Endothelial cell of umbilical vein (primary cell): ENCODE measurements at regions of chr3 and their contacts with region 1.

Region 1: DNA sequence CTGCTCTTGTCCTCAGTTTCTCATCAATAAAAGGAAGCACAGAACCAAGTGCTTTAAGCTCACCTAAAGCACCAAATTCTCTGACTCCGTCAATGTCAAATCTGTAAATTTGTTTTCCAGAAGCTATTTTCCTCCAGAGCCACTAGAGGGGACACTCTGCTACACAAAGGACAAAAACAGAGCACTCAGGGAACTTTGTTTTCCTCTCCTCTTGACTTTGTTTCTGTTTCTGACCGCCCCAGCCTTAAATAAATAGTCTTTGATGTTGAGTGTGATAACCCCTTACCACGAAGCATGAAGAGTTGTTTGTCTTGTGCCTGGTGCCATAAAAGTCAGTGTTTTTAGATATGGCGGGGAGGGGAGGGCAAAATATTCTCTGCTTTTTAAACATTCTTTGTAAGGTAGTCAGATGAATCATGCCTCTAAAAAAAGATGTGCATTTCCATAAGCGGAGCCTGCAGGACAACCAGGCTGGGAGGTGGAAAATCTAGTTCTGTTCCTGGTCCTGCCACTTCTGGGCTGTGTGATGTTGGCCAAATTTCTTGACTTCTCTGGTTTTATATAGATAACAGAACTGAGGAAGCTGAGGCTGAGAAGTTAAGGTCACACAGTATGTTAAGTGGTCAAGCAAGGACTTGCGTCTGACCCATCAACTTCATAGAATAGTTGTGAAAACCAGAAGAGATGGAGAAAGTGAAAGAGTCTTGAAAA is 7.3 kb upstream of the ZBTB38 start:
- DNase-seq: peak; percentile 92
- H3K4me3 ChIP-seq: peak overlapping the region in 1 of 3 experiments; percentile 31
- H3K27ac ChIP-seq: peak overlapping the region; percentile 53
- H3K4me1 ChIP-seq: peaks cover 18% of the 10 kb centered on the region
- H3K27me3 ChIP-seq: no peaks in the 10 kb centered on the region
- CTCF ChIP-seq: peak; percentile 69 to 72
- POLR2A ChIP-seq: no peak

Region 2: GRCh38 chr3:141316851-141317250 is 44.2 kb before region 1 on chr3:
- CTCF ChIA-PET with region 1: interaction called, 58 read pairs
- POLR2A ChIA-PET with region 1: no interaction called
- dilution Hi-C with region 1: no loop called
- intact Hi-C with region 1: no loop called
- DNase-seq: no peak
- H3K4me3 ChIP-seq: no peak overlapping the region
- H3K27ac ChIP-seq: no peak overlapping the region
- H3K4me1 ChIP-seq: peaks cover 20% of the 10 kb centered on the region
- H3K27me3 ChIP-seq: no peaks in the 10 kb centered on the region
- CTCF ChIP-seq: no peak
- POLR2A ChIP-seq: no peak

Region 3: DNA sequence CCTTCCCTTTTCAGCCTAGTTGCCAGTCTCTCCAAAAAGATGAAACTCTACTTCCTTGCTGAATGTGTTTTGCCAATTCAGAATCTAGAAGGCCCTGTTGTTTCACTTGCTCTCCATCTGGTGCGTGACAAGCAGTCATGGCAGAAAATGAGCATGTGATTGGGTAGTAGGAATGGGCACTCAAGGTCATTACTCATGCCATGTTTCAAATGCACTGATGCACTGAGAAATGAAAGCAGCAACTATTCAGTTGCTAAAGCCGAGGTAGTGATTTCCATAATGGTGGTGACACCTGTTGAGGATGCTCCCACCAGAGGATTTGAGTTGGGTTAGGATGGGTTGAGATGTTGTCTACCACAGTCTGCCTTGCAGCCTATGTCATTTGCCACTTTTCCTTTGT is 19.9 kb after region 1 on chr3:
- CTCF ChIA-PET with region 1: interaction called, 10 read pairs
- POLR2A ChIA-PET with region 1: no interaction called
- dilution Hi-C with region 1: no loop called
- intact Hi-C with region 1: no loop called
- DNase-seq: no peak
- H3K4me3 ChIP-seq: no peak overlapping the region
- H3K27ac ChIP-seq: no peak overlapping the region
- H3K4me1 ChIP-seq: no peaks in the 10 kb centered on the region
- H3K27me3 ChIP-seq: no peaks in the 10 kb centered on the region
- CTCF ChIP-seq: no peak
- POLR2A ChIP-seq: no peak

Region 4: DNA sequence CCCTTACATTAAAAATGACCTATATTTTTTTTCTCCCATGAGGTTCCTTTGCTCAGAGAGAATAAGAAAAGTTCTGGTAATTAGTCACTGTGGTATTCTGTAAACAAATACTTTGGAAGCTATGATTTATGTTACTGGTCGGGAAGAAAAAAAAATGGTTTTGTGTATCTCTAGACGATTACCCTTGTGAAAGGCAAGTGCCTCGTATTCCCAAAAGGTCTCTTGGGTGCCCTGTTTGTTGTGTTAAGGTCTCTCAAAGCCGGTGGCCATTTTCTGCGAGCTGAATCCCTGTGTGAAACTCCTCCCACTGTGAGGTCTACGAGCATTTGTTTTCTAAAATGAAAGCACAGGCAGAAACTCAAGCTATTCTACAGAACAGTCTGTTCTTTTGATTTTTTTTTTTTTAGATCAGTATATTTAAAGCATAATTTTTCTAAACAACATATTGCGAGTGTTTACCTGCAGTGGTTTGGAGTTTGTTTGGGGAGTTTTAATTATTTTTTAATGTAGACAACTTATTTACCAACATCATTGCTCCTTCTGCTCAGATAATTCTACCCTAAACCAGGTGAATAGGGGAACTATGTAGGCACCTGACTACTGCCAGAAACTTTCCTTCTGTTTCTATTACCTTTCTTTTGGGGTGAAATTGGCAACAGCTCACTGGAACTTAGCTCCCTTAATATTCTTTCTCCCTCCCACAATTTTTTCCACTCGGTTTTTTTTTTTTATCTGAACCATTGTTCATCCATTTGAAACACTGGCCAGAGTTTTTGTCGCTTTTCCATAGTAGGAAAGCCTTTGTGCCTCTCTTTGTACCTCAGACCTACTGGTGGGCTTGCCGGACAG is 51.3 kb after region 1 on chr3:
- CTCF ChIA-PET with region 1: interaction called, 37 read pairs
- POLR2A ChIA-PET with region 1: no interaction called
- dilution Hi-C with region 1: no loop called
- intact Hi-C with region 1: loop called (anchors 1 kb)
- DNase-seq: peak; percentile 88
- H3K4me3 ChIP-seq: peak overlapping the region in 1 of 3 experiments; percentile 27
- H3K27ac ChIP-seq: peak overlapping the region; percentile 90
- H3K4me1 ChIP-seq: peaks cover 68% of the 10 kb centered on the region
- H3K27me3 ChIP-seq: no peaks in the 10 kb centered on the region
- CTCF ChIP-seq: no peak
- POLR2A ChIP-seq: peak; percentile 41

Region 5: GRCh38 chr3:141452036-141452435 is 91.0 kb after region 1 on chr3:
- CTCF ChIA-PET with region 1: interaction called, 153 read pairs
- POLR2A ChIA-PET with region 1: no interaction called
- dilution Hi-C with region 1: no loop called
- intact Hi-C with region 1: loop called (anchors 1 kb)
- DNase-seq: peak; percentile 83
- H3K4me3 ChIP-seq: no peak overlapping the region
- H3K27ac ChIP-seq: no peak overlapping the region
- H3K4me1 ChIP-seq: peaks cover 12% of the 10 kb centered on the region
- H3K27me3 ChIP-seq: no peaks in the 10 kb centered on the region
- CTCF ChIP-seq: peak; percentile 59 to 62
- POLR2A ChIP-seq: no peak